Psoas muscle (tissue), 8 donors: ENCODE measurements at regions of chr10 and their contacts with region 1.

Region 1: DNA sequence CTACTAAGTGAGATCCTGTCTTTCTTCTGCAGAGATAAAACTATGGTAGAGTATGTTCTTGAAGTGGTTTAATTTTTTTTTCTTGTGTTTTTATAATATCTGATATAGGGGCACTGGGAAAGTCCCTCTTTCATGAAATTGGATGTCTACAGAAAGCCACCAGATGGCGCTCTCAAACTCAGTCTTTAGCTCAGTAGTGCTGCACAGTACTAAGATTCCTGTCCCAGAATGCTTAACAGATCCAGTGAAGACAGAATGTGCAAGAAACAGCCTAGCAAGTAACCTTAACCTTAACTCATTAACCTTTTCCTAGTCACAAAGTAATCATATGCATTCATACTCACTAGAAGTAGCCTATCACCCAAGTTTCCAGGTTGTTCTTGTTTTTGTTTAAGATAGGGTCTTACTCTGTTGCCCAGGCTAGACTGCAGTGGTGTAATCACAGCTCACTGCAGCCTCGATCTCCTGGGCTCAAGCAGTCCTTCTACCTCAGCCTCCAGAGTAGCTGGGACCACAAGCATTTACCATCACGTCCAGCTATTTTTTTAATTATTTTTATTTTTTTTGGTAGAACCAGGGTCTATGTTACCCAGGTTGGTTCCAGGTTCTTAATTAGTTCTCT is 56.7 kb downstream of the IDE start:
- DNase-seq: peak in 1 of 2 donors; percentile 25
- ATAC-seq: peak; percentile 70 to 94 (median 82)
- H3K4me3 ChIP-seq: no peak overlapping the region
- H3K27ac ChIP-seq: no peak overlapping the region
- H3K4me1 ChIP-seq: peaks cover under 1% of the 10 kb centered on the region
- H3K27me3 ChIP-seq: no peaks in the 10 kb centered on the region
- CTCF ChIP-seq: peak; percentile 82

Region 2: DNA sequence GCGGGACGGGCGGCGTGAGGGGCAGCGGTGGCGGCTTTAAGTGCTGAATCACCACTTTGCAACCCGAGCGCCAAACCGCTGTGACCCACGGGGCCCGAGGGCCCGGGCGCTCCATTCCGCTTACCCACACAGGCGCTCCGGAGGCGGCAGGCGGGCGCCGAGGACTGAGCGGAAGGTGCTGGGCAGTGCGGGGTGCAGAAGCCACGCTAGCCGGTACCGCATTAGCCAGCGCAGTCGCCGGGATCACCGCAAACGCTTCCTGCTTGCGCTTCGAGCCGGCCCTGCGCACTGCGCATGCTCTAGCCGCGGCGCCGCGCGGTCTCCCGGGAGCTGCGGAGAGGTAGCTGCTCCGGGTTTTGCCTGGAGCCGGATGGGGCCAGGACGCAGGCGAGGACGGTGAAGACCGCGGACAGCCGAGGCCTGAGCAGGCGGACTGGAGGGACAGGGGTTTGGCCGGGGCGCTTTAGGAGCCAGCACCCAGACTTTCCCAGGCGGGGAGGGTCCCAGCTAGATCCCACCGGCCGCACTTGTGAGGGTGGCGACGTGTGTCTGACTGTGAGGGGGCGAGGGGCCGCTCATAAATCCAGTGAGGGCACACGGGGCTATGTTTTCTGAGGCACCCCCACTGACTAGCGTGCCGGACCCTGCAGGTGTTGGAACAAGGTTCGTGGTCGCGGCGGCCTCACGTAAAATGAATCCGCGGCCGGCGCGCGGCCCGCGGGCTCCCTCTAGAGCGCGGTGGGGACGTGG is 56.8 kb after region 1 on chr10 and contains the start of gene IDE:
- intact Hi-C with region 1: loop called (anchors 1 to 5 kb)
- DNase-seq: peak; percentile 89 to 93
- ATAC-seq: peak; percentile 93 to 94 (median 94)
- H3K4me3 ChIP-seq: peak within 1 kb of the TSS; percentile 93
- H3K27ac ChIP-seq: peak within 1 kb of the TSS; percentile 96
- H3K4me1 ChIP-seq: peaks cover 39% of the 10 kb centered on the region
- H3K27me3 ChIP-seq: no peaks in the 10 kb centered on the region
- CTCF ChIP-seq: peak; percentile 74
- total RNA-seq, gene IDE: 48.8 to 69.3 (median 62.2) TPM